ENCODE measurements at regions of chr16 and their contacts with region 1.

Region 1: GRCh38 chr16:73396556-73396955 is 348.6 kb upstream of the ZFHX3 start:
- DNase-seq: no peak
- H3K4me3 ChIP-seq: no peak overlapping the region
- H3K27ac ChIP-seq: no peak overlapping the region
- H3K4me1 ChIP-seq: no peaks in the 10 kb centered on the region
- H3K27me3 ChIP-seq: no peaks in the 10 kb centered on the region
- CTCF ChIP-seq: no peak

Region 2: DNA sequence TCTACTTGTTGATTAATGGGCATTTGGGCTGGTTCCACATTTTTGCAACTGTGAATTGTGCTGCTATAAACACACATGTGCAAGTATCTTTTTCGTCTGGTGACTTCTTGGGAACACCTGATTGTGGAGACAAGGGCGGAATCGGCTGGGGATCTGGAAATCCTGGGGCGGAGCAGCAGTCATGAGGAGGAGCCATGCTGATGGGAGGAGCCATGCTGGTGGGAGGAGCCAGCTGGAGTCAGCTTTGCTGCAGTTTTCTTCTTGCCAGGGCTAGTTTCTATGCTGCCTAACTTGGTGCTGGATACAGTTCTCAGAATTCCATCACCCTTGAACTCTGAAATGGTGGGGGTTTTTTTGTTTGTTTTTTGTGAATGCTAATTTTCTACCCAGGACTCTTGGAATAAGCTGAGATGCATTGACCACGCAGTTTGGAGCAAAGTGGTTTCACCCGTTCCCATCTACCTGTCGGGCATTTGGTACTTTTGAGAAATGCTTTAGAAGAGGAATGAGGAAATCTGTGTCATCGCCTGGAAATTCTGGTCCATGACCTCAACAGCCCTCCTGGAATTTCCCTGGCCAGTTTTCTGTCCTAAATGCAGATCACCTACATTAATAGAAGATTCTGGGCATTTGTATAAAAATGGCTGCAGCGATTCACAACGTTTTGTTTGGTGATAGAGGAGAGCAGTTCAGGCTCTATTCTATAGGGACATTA is 131.3 kb before region 1 on chr16:
- CTCF ChIA-PET with region 1: no interaction called
- dilution Hi-C with region 1: no loop called
- in situ Hi-C with region 1: no loop called
- intact Hi-C with region 1: no loop called
- DNase-seq: no peak
- H3K4me3 ChIP-seq: no peak overlapping the region
- H3K27ac ChIP-seq: no peak overlapping the region
- H3K4me1 ChIP-seq: no peaks in the 10 kb centered on the region
- H3K27me3 ChIP-seq: no peaks in the 10 kb centered on the region
- CTCF ChIP-seq: no peak

Region 3: GRCh38 chr16:73315645-73316044 is 80.9 kb before region 1 on chr16:
- CTCF ChIA-PET with region 1: no interaction called
- dilution Hi-C with region 1: loop called (anchors 5 kb)
- in situ Hi-C with region 1: no loop called
- intact Hi-C with region 1: no loop called
- DNase-seq: no peak
- H3K4me3 ChIP-seq: no peak overlapping the region
- H3K27ac ChIP-seq: no peak overlapping the region
- H3K4me1 ChIP-seq: no peaks in the 10 kb centered on the region
- H3K27me3 ChIP-seq: no peaks in the 10 kb centered on the region
- CTCF ChIP-seq: no peak

Region 4: DNA sequence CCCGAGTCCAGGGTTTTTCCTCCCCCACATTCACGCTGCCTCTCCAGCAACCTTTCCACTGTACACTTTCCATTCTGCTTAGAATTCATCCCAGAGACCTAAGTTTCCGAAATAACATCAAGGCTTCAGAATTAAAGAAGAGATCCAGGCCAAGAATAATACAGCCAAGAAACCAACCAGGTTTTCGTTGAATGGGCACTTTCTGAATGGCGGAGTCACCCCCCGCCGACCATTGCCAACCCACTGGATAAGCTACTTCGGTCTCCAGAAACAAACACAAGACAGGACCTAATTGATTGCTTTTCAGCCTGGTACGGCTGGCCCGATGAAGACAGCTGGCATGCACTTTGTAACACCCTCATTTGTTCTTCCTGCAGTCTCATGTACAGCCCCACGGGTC is 40.6 kb before region 1 on chr16:
- CTCF ChIA-PET with region 1: no interaction called
- dilution Hi-C with region 1: no loop called
- in situ Hi-C with region 1: no loop called
- intact Hi-C with region 1: no loop called
- DNase-seq: no peak
- H3K4me3 ChIP-seq: no peak overlapping the region
- H3K27ac ChIP-seq: no peak overlapping the region
- H3K4me1 ChIP-seq: no peaks in the 10 kb centered on the region
- H3K27me3 ChIP-seq: no peaks in the 10 kb centered on the region
- CTCF ChIP-seq: no peak